ENCODE measurements at regions of chr10 and their contacts with region 1.

Region 1: DNA sequence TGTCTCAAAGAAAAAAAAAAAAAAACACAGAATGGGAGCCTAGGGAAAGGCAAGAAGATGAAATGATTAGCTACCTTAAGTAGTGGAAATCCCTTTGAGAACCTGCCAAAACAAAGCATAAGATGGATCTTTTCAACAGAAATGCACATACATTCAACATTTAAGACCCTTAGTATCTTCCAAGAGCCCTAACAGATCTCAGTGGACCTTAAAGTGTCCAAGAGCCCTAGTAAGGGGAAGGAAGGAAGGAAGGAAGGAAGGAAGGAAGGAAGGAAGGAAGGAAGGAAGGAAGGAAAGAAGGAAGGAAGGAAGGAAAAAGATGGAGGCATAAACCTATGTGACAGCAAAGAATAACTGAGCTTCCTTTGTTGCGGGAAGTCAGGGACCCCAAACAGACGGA is 11.6 kb upstream of the MACROH2A2 start:
- DNase-seq: no peak
- H3K4me3 ChIP-seq: no peak overlapping the region
- H3K27ac ChIP-seq: no peak overlapping the region
- H3K4me1 ChIP-seq: peaks cover 0 to 8% (median 6%) of the 10 kb centered on the region in 4 experiments; a peak in 6 of 7 replicates
- H3K27me3 ChIP-seq: peaks cover 0 to 17% (median 15%) of the 10 kb centered on the region in 4 experiments; a peak in 5 of 7 replicates
- CTCF ChIP-seq: no peak
- EP300 ChIP-seq: no peak
- POLR2A ChIP-seq: no peak
- RAD21 ChIP-seq: no peak

Region 2: DNA sequence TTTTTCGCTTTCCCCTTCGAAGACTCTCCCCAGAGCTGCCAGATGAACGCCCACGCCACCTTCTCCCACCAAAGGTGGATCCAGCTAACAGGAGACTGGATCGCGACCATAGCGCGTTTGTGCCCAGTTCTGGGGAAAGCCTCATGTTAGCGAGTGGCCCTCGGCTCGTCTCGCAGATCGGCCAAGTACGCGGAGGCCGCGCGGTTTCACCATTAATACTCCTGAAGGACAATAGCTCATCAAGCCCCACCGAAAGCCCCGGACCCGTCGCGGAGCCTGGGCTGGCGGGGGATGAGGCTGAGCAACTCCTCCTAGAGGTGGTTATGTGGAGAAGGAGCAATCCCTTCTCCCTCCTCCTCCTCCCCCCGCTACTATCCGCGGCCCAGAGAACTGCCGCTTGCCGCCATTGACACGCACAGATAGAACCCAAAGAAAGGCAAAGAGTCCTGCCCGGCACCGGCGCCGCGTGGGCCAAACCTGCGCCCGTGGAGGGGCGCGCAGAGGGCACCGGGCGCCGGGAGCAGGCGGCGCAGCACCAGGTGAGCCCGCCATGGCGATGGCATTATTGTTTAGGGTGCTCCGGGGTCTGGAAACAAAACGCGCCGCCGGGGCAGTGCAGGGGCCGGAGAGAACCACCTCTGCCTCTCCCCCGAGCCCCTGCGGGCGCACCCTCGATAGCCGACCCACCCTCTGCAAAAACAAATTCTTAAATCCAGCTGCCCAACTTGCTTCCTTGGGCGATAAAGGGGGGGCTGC is 11.6 kb after region 1 on chr10 and contains the start of gene MACROH2A2:
- CTCF ChIA-PET with region 1: interaction called, 13 read pairs
- POLR2A ChIA-PET with region 1: interaction called, 5 read pairs
- DNase-seq: peak; percentile 43 to 84
- H3K4me3 ChIP-seq: peak within 1 kb of the TSS; percentile 79 to 85 (median 82)
- H3K27ac ChIP-seq: no peak within 1 kb of the TSS
- H3K4me1 ChIP-seq: peaks cover 0 to 10% (median 1%) of the 10 kb centered on the region in 4 experiments; a peak in 4 of 7 replicates
- H3K27me3 ChIP-seq: peaks cover 30 to 73% (median 59%) of the 10 kb centered on the region in 4 experiments
- CTCF ChIP-seq: peak; percentile 34 to 52 (median 41)
- EP300 ChIP-seq: no peak; a peak in 1 of 3 replicates
- POLR2A ChIP-seq: peak in 1 of 2 experiments; percentile 20; a peak in 2 of 3 replicates
- RAD21 ChIP-seq: peak; percentile 27 to 42; a peak in 3 of 4 replicates
- total RNA-seq, gene MACROH2A2: 7.8 and 7.9 TPM in 2 replicates

Measured in H1 (cell line).